ENCODE measurements at regions of chr6 and their contacts with region 1.

Region 1: GRCh38 chr6:38155144-38155543 is 335.6 kb downstream of the ZFAND3 start:
- DNase-seq: no peak
- H3K4me3 ChIP-seq: no peak overlapping the region
- H3K27ac ChIP-seq: no peak overlapping the region
- H3K4me1 ChIP-seq: no peaks in the 10 kb centered on the region
- H3K27me3 ChIP-seq: no peaks in the 10 kb centered on the region
- CTCF ChIP-seq: no peak
- POLR2A ChIP-seq: no peak

Region 2: DNA sequence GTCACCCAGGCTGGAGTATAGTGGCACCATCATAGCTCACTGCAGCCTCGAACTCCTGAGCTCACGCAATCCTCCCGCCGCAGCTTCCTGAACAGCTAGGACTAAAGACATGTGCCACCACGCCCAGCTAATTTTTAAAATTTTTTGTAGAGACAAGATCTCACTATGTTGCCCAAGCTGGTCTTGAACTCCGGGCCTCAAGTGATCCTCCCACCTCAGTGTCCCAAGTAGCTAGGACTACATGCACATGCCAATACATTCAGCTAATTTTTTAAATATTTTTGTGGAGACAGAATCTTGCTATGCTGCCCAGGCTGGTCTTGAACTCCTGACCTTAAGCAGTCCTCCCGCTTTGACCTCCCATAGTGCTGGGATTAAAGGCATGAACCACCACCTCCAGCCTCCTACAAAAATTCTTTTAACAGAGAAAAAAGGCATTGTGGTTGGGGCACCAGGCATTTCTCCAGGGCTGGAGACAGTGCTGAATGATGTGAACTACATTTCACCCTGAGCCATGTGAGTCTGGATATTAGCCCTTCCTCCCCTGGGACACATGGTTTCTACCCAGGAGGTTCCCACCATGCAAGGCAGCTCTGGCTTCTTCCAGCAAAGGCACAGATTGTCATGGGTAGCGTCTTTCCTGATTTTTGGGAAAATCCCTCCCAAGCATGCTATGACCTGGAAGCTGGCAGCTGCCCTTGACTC is 758.5 kb before region 1 on chr6:
- intact Hi-C with region 1: loop called (anchors 10 kb)
- DNase-seq: peak; percentile 34
- H3K4me3 ChIP-seq: no peak overlapping the region
- H3K27ac ChIP-seq: no peak overlapping the region
- H3K4me1 ChIP-seq: peaks cover 27% of the 10 kb centered on the region
- H3K27me3 ChIP-seq: no peaks in the 10 kb centered on the region
- CTCF ChIP-seq: no peak
- POLR2A ChIP-seq: no peak

Region 3: GRCh38 chr6:38234934-38235682 is 80.0 kb after region 1 on chr6:
- intact Hi-C with region 1: loop called (anchors 10 kb)
- DNase-seq: no peak
- H3K4me3 ChIP-seq: no peak overlapping the region
- H3K27ac ChIP-seq: no peak overlapping the region
- H3K4me1 ChIP-seq: no peaks in the 10 kb centered on the region
- H3K27me3 ChIP-seq: no peaks in the 10 kb centered on the region
- CTCF ChIP-seq: no peak
- POLR2A ChIP-seq: no peak

Region 4: DNA sequence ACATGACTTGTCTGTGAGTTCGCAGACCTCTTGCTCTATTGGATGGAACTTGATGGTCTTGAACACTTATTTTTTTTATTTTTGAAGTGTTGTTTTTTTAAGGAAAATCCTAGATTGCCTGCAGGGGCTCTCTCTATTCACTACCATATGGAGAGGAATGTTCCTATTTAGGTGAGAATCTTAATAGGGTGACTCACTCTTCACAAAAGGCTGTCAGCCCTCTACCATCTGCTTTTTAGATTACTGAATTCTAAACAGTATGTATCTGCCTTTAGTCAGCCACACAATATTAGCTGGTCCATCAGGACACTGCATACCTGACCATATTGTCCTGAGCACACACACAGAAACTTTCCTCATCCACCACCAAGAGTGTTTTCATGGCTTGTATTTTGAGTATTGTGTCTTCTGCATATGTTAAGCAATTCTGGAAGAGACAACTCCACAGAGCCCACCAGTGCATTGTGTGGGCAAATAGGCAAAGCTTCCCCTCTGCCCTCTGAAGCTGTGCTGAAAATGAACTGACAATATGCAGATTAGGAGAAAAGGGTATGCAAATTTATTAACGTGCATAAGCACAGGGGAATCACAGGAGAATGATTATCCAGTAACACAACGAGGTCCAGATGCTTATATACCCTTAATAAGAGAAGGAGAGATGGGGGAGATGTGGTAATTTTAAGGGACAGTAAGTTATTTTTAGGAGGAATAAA is 491.2 kb after region 1 on chr6:
- intact Hi-C with region 1: no loop called
- DNase-seq: no peak
- H3K4me3 ChIP-seq: no peak overlapping the region
- H3K27ac ChIP-seq: no peak overlapping the region
- H3K4me1 ChIP-seq: no peaks in the 10 kb centered on the region
- H3K27me3 ChIP-seq: no peaks in the 10 kb centered on the region
- CTCF ChIP-seq: no peak
- POLR2A ChIP-seq: no peak

Measured in testis (tissue), 5 donors.